BJ (cell line): ENCODE measurements at regions of chr6 and their contacts with region 1.

Region 1: GRCh38 chr6:138115877-138116660 is 8.8 kb upstream of the PERP start:
- DNase-seq: no peak
- H3K4me3 ChIP-seq: no peak overlapping the region
- H3K27me3 ChIP-seq: no peaks in the 10 kb centered on the region; the same call in 1 of the 2 replicates
- CTCF ChIP-seq: peak; percentile 60

Region 2: DNA sequence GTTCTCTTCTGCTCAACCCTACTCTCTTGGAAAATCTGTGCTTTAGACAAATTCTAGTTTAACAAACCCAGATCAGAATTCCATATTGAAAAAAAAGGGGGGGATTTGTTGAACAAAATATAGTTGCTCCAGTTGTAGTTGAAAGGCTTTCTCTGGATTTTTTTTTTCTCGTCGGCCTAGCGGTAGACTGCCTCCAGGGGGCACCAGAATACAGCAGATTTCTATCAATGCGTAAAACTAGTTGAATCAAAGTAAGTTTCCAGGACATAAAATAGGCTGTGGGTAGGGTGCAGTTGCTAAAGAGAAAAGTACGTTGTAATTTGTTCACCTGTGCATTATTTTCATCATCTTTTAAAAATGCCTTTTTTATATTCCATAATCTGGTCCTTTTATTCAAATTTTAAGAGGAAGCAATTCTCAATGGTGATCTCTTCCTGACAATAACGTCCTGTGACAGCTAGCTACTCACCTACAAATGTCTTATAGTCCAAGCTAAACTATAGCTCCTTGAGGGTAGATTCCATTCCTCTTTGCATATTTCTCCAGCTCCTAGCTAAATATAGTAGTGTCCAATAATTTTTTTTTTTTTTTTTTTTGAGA is 114.2 kb before region 1 on chr6:
- CTCF ChIA-PET with region 1: interaction called, 21 read pairs
- POLR2A ChIA-PET with region 1: no interaction called
- DNase-seq: no peak
- H3K4me3 ChIP-seq: no peak overlapping the region
- H3K27me3 ChIP-seq: 0 out of 2 replicates have a peak, but pooled peaks cover 1% of the 10 kb centered on the region
- CTCF ChIP-seq: peak; percentile 90

Region 3: DNA sequence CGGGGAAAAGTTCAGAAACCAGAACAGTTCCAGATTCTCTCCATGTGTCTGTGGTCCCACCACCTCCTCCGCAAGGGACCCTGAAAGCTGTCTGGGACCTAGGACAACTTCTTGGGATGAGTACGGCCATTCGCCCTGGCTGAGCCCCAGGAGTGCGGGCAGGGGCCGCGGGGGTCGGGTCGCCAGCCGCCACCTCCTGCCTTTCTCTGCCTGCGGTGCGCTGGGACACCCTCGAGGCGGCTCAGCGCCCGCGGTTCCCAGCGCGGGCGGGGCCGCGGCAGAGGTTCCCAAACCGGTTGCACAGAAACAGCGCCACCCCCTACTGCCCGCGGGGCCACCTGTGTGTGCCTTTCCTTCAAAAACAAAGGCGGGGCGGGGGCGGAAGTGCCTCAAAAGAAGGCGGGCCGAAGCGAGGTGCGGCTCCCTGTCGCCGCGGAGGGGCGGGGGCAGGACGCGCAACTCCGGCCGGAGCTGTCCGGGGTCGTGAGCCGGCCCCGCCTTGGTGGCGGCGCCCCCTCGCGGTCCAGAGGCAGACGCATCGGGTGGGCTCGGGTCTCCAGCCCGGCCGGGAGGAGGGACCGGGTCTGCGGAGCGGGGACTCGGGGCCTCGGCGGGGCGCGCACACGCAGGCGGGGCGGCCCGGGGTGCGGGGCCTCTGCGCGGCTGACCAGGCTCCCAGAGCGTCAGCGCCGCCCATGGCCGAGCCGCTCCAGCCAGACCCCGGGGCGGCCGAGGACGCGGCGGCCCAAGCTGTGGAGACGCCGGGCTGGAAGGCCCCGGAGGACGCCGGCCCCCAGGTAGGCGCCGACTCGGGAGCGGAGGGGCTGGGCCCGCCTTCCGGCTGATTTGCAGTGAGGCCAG is 288.0 kb after region 1 on chr6 and contains the start of gene HEBP2:
- CTCF ChIA-PET with region 1: interaction called, 34 read pairs
- POLR2A ChIA-PET with region 1: no interaction called
- DNase-seq: no peak
- H3K4me3 ChIP-seq: peak within 1 kb of the TSS; percentile 50
- H3K27me3 ChIP-seq: no peaks in the 10 kb centered on the region
- CTCF ChIP-seq: peak; percentile 34; the same call in 1 of the 2 replicates
- polyA plus RNA-seq, gene HEBP2: 14.5 and 23.6 TPM in 2 replicates

Region 4: DNA sequence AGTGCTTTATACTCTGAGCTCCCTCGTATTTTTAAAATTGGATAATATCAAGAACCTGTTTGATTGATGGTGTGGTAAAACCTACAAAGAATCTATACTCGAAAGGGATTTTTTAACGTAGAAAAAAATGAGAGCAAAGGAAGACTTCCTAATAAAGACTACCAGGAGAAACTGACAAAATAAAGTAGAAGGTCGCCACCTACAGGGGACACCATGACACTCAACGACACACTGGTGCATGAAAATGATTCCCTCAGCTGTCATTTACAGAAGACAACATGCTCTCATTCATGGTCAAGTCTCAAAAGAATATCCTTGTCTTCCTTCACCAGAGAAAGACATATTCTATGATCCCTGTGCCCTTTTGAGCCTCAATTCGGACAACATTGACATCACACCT is 393.3 kb after region 1 on chr6:
- CTCF ChIA-PET with region 1: interaction called, 18 read pairs
- POLR2A ChIA-PET with region 1: no interaction called
- DNase-seq: no peak
- H3K4me3 ChIP-seq: no peak overlapping the region
- H3K27me3 ChIP-seq: no peaks in the 10 kb centered on the region
- CTCF ChIP-seq: peak; percentile 47

Region 5: DNA sequence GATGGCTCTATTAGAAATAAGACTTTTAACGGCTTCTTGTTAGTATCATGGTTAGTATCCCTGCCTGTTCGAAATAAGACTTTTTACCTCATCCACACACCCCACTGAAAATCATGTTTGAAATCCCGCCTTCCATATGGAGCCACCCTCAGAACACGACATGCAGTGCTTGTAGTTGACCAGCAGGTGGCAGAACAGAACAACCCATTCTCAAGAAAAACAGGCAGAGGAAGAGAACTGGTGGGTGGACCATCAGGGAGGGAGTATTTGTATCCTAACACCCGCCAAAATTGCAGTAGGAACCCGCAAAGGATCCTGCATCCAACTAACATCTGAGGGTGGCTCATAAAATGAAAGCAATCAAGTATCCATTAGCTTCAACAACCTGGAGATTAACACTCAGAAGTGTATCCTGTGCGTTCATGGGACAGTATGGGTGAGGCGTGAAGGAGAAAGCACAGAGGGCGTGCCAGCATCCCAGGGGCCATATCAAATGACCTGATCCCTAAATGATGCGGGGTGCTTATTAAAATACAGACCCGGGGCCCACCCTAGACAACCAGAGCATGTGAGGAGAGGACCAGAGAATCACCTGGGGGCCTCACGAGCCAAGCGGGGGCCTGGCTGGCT is 472.9 kb after region 1 on chr6:
- CTCF ChIA-PET with region 1: interaction called, 23 read pairs
- POLR2A ChIA-PET with region 1: no interaction called
- DNase-seq: no peak
- H3K4me3 ChIP-seq: no peak overlapping the region
- H3K27me3 ChIP-seq: no peaks in the 10 kb centered on the region
- CTCF ChIP-seq: peak; percentile 94